AG04450 (cell line): ENCODE measurements at regions of chr13 and their contacts with region 1.

Region 1: DNA sequence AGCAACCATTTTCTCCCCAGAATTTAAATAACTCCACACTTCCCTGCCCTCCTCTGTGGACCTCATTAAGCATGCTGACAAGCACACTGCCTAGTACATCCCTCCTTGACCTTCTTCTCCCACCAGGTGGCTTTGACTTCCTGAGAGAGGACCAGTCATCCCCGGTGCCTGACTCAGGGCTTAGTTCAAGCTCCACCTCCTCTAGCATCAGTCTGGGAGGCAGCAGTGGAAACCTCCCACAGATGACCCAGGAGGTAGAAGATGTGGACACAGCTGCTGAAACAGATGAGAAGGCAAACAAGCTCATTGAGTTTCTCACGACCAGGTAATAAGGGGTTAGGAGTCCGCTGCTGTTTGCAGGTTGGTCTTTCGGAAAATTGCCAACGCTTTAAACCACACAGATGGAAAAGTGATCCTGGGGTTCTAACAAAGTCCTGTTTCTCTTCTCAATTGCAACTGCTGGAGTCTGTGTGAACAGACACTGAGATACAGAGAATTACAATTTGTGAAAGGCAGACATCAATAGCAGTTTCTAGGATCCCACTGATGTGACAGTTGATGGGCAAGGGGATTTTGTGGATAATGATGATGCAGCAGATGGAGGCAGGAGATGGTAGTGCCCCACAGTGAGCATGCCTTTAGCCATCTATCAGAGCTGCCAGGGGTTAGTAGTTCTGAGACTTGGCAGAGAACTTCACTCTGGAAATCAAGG is 86.7 kb downstream of the ZAR1L start:
- DNase-seq: peak; percentile 46
- H3K4me3 ChIP-seq: no peak overlapping the region
- H3K27ac ChIP-seq: peak overlapping the region; percentile 40
- H3K27me3 ChIP-seq: no peaks in the 10 kb centered on the region
- CTCF ChIP-seq: peak; percentile 14; the same call in 1 of the 2 replicates

Region 2: GRCh38 chr13:32211813-32212212 is 16.7 kb before region 1 on chr13:
- CTCF ChIA-PET with region 1: interaction called, 4 read pairs
- POLR2A ChIA-PET with region 1: interaction called, 38 read pairs
- DNase-seq: peak; percentile 92
- H3K4me3 ChIP-seq: no peak overlapping the region
- H3K27ac ChIP-seq: peak overlapping the region; percentile 89
- H3K27me3 ChIP-seq: no peaks in the 10 kb centered on the region
- CTCF ChIP-seq: no peak

Region 3: GRCh38 chr13:32791545-32792172 is 563.2 kb after region 1 on chr13:
- CTCF ChIA-PET with region 1: no interaction called
- POLR2A ChIA-PET with region 1: no interaction called
- DNase-seq: no peak
- H3K4me3 ChIP-seq: no peak overlapping the region
- H3K27ac ChIP-seq: no peak overlapping the region
- H3K27me3 ChIP-seq: no peaks in the 10 kb centered on the region
- CTCF ChIP-seq: no peak